MCF 10A (cell line): ENCODE measurements at regions of chr1 and their contacts with region 1.

Region 1: GRCh38 chr1:234326497-234327366 is 46.5 kb upstream of the COA6 start:
- DNase-seq: peak; percentile 82
- H3K4me3 Mint-ChIP-seq: no peak overlapping the region
- H3K27ac Mint-ChIP-seq: no peak overlapping the region
- H3K4me1 Mint-ChIP-seq: peaks cover 6% of the 10 kb centered on the region
- H3K27me3 Mint-ChIP-seq: peaks cover 14% of the 10 kb centered on the region
- CTCF ChIP-seq: peak; percentile 84

Region 2: GRCh38 chr1:233828480-233828879 is 498.3 kb before region 1 on chr1:
- CTCF ChIA-PET with region 1: no interaction called
- POLR2A ChIA-PET with region 1: no interaction called
- intact Hi-C with region 1: no loop called
- DNase-seq: no peak
- H3K4me3 Mint-ChIP-seq: no peak overlapping the region
- H3K27ac Mint-ChIP-seq: no peak overlapping the region
- H3K4me1 Mint-ChIP-seq: no peaks in the 10 kb centered on the region
- H3K27me3 Mint-ChIP-seq: peaks cover 41% of the 10 kb centered on the region
- CTCF ChIP-seq: no peak

Region 3: GRCh38 chr1:234125283-234125682 is 201.4 kb before region 1 on chr1:
- CTCF ChIA-PET with region 1: interaction called, 47 read pairs
- POLR2A ChIA-PET with region 1: interaction called, 3 read pairs
- intact Hi-C with region 1: loop called (anchors 1 kb)
- DNase-seq: peak; percentile 79
- H3K4me3 Mint-ChIP-seq: no peak overlapping the region
- H3K27ac Mint-ChIP-seq: no peak overlapping the region
- H3K4me1 Mint-ChIP-seq: no peaks in the 10 kb centered on the region
- H3K27me3 Mint-ChIP-seq: no peaks in the 10 kb centered on the region
- CTCF ChIP-seq: peak; percentile 64

Region 4: GRCh38 chr1:234154320-234155251 is 172.1 kb before region 1 on chr1:
- CTCF ChIA-PET with region 1: interaction called, 15 read pairs
- POLR2A ChIA-PET with region 1: no interaction called
- intact Hi-C with region 1: loop called (anchors 1 kb)
- DNase-seq: peak; percentile 94
- H3K4me3 Mint-ChIP-seq: no peak overlapping the region
- H3K27ac Mint-ChIP-seq: peak overlapping the region; percentile 20
- H3K4me1 Mint-ChIP-seq: peaks cover 2% of the 10 kb centered on the region
- H3K27me3 Mint-ChIP-seq: no peaks in the 10 kb centered on the region
- CTCF ChIP-seq: peak; percentile 99

Region 5: GRCh38 chr1:234272656-234273312 is 53.9 kb before region 1 on chr1:
- CTCF ChIA-PET with region 1: no interaction called
- POLR2A ChIA-PET with region 1: no interaction called
- intact Hi-C with region 1: no loop called
- DNase-seq: no peak
- H3K4me3 Mint-ChIP-seq: no peak overlapping the region
- H3K27ac Mint-ChIP-seq: no peak overlapping the region
- H3K4me1 Mint-ChIP-seq: no peaks in the 10 kb centered on the region
- H3K27me3 Mint-ChIP-seq: no peaks in the 10 kb centered on the region
- CTCF ChIP-seq: no peak

Region 6: GRCh38 chr1:234315091-234315541 is 11.6 kb before region 1 on chr1:
- CTCF ChIA-PET with region 1: interaction called, 233 read pairs
- POLR2A ChIA-PET with region 1: interaction called, 5 read pairs
- intact Hi-C with region 1: no loop called
- DNase-seq: peak; percentile 89
- H3K4me3 Mint-ChIP-seq: no peak overlapping the region
- H3K27ac Mint-ChIP-seq: peak overlapping the region; percentile 1
- H3K4me1 Mint-ChIP-seq: peaks cover 14% of the 10 kb centered on the region
- H3K27me3 Mint-ChIP-seq: no peaks in the 10 kb centered on the region
- CTCF ChIP-seq: no peak

Region 7: GRCh38 chr1:234361102-234361603 is 34.4 kb after region 1 on chr1:
- CTCF ChIA-PET with region 1: interaction called, 10 read pairs
- POLR2A ChIA-PET with region 1: interaction called, 8 read pairs
- intact Hi-C with region 1: no loop called
- DNase-seq: no peak
- H3K4me3 Mint-ChIP-seq: no peak overlapping the region
- H3K27ac Mint-ChIP-seq: no peak overlapping the region
- H3K4me1 Mint-ChIP-seq: peaks cover 12% of the 10 kb centered on the region
- H3K27me3 Mint-ChIP-seq: no peaks in the 10 kb centered on the region
- CTCF ChIP-seq: no peak

Region 8: DNA sequence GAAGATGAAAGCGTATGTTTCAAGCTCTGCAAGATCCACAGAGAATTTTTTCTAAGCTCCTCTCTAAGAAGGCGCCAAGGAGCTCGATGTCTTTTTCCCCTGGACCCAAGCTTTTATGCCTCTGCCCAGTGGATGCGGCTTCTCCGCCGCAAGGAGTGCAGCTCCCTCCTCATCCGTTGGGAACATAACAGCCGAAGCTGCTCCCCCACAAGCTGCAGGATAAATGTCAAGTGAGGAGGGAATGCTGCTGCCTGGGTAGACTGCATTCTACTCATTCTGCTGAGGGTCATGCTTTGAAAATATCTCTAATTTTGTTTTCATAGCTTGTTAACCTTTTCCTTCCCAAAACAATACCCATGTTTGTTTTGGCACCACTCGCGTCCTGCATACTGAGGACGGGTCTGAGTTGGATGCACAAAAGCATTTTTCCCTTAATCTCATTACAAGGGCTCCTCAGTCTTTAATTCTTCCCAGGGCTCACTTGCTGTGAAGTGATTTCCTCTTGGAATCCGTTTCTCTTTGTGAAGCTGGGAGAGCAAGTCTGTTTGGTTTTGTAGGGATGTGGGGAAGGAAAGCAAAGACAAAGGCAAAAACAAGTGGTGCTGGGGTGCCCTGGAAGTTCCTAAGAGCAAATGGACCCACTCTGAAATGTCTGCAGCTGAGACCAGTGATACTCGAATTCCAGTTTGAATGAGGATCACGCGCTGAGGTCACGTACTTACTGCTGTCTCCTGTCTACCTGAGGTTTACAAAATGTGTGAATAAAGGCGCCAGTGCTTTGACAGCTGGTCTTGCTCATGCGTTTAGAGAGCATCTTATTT is 417.3 kb after region 1 on chr1:
- CTCF ChIA-PET with region 1: no interaction called
- POLR2A ChIA-PET with region 1: no interaction called
- intact Hi-C with region 1: no loop called
- DNase-seq: no peak
- H3K4me3 Mint-ChIP-seq: no peak overlapping the region
- H3K27ac Mint-ChIP-seq: no peak overlapping the region
- H3K4me1 Mint-ChIP-seq: peaks cover 11% of the 10 kb centered on the region
- H3K27me3 Mint-ChIP-seq: no peaks in the 10 kb centered on the region
- CTCF ChIP-seq: no peak